HEK293 (cell line): ENCODE measurements at regions of chr14 and their contacts with region 1.

Region 1: GRCh38 chr14:23068476-23069412 is 11.4 kb upstream of the CDH24 start:
- H3K4me3 ChIP-seq: 0 out of 2 replicates have a peak overlapping the region, but pooled peaks have one; percentile 5
- H3K27ac ChIP-seq: peak overlapping the region; percentile 66
- H3K4me1 ChIP-seq: peaks cover 16% of the 10 kb centered on the region
- CTCF ChIP-seq: peak; percentile 95

Region 2: DNA sequence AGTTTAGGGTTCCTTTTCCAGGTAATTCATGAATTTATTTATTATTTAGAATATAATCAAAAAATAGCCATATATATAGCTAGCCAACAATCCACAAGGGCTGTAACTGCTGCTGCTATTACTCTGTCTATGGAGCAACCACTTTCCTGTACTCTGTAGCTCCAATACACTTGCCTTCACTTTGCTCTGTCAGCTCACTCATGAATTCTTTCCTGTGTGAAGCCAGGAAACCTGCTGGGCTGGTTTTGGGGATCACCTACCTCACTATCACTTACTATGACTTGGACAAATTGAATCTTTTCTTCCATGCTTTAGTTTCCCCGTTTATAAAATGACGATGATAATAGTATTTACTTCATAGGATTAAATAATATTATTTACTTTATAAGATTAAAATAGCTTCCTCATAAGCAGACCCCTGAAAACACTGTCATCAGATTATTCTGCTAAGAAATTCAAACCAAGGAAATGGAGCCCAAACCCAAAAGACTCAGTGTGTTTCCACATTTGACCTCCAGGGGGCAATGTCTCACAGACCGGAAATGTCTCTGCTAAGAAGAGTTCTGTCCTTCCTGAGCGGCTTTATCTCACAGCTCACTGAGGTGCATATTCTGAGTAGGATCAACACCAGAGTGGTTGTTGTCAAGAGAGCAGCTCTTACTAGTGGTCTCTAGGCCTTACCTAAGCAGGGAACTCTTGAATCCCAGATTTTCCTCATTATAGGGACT is 936.8 kb before region 1 on chr14:
- CTCF ChIA-PET with region 1: no interaction called
- POLR2A ChIA-PET with region 1: no interaction called
- H3K4me3 ChIP-seq: no peak overlapping the region
- H3K27ac ChIP-seq: no peak overlapping the region
- H3K4me1 ChIP-seq: no peaks in the 10 kb centered on the region
- CTCF ChIP-seq: no peak

Region 3: GRCh38 chr14:22994762-22995275 is 73.9 kb before region 1 on chr14:
- CTCF ChIA-PET with region 1: interaction called, 469 read pairs
- POLR2A ChIA-PET with region 1: interaction called, 3 read pairs
- H3K4me3 ChIP-seq: no peak overlapping the region
- H3K27ac ChIP-seq: no peak overlapping the region
- H3K4me1 ChIP-seq: peaks cover 7% of the 10 kb centered on the region
- CTCF ChIP-seq: no peak

Region 4: GRCh38 chr14:23057757-23058653 is 10.7 kb before region 1 on chr14:
- CTCF ChIA-PET with region 1: interaction called, 58 read pairs
- POLR2A ChIA-PET with region 1: interaction called, 21 read pairs
- H3K4me3 ChIP-seq: peak overlapping the region; percentile 65
- H3K27ac ChIP-seq: peak overlapping the region; percentile 73
- H3K4me1 ChIP-seq: peaks cover 4% of the 10 kb centered on the region; the same call in 1 of the 2 replicates
- CTCF ChIP-seq: peak; percentile 96

Region 5: DNA sequence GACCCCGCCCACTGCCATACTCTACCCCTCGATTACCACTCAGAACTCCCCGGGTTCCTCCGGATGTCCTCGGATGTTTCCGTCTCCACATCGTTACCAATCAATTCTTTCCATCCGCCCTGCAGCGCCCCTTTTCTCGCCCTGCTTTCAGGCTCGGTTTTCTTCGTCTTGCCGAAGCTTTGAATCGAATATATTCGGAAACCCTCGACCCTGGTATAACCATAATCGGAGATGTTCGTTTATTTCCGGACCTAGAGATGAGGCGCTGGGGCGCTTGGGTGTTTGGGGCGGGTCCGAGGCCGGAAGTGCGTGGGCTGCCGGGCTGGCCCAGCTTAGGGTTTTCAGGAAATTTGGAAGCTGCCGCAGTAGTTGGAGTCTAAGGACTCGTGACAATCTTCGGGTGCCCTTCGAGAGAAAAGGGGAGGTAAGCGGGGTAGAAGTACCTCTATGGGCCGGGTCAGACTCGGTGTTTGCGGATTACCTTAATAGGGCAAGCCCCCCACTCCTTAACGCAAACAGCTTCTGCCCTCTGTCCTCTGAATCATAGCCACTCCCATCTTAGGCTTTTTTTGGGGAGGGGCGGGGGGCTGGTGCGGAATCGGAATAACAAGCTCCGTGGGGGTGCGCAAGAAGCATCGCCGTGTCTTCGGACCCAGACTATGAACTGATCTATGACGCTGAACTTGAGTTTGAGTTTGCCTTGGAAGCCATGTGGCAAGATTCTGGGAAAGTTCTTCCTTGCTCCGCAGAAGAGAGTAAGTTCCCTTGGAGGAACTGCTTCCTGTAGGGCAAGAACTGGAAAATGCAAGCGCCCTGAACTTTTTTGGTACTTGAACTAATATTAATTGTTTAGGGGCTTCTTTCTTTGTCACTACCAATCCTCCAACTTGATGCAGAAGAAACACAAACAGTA is 26.7 kb after region 1 on chr14 and contains the start of gene C14orf119:
- CTCF ChIA-PET with region 1: interaction called, 49 read pairs
- POLR2A ChIA-PET with region 1: interaction called, 48 read pairs
- H3K4me3 ChIP-seq: peak within 1 kb of the TSS; percentile 97
- H3K27ac ChIP-seq: peak within 1 kb of the TSS; percentile 92
- H3K4me1 ChIP-seq: peaks cover 10% of the 10 kb centered on the region; the same call in 1 of the 2 replicates
- CTCF ChIP-seq: no peak

Region 6: GRCh38 chr14:23186913-23187654 is 118.3 kb after region 1 on chr14:
- CTCF ChIA-PET with region 1: interaction called, 17 read pairs
- POLR2A ChIA-PET with region 1: interaction called, 3 read pairs
- H3K4me3 ChIP-seq: no peak overlapping the region
- H3K27ac ChIP-seq: no peak overlapping the region
- H3K4me1 ChIP-seq: no peaks in the 10 kb centered on the region; the same call in 1 of the 2 replicates
- CTCF ChIP-seq: 0 out of 2 replicates have a peak, but pooled peaks have one; percentile 39